ENCODE measurements at regions of chr3 and their contacts with region 1.

Region 1: DNA sequence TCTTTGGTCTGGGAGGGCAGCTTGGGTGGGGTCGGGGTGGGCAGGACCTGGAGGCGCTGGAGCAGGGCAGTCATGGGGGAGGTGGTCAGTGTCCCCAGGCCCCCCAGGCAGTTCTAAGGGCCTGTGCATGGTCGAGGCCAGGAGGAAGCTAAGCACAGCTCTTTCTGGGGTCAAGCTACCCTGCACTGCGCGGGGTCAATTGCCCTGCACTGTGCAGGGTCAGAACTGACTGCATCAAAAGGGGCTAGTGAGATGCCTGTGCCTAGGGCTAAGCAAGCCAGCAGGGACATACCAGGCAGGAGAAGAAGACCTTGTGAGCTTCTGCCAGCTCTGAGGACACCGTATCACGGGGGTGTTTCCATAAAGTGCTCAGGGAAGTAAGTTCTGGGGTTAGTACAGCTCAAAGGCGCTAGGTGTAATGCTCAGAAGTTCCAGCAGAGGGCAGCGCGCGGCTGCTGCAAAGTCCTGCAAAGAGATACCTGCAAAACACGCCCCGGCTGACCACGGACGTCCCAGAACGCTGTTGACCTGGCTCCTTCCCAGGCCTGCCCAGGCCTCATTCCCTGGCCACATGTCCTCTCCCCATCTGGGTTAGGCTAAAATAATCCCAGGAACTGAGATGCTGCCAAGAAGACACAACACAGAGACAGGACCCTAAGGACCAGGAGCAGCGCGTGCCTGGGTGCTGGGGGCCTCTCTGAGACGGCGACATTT is 18.8 kb upstream of the IQSEC1 start:
- DNase-seq: peak; percentile 73 to 80
- ATAC-seq: peak; percentile 89
- H3K4me3 ChIP-seq: no peak overlapping the region
- H3K27ac ChIP-seq: peak overlapping the region in 3 of 4 donors; percentile 4 to 46 (median 27)
- H3K4me1 ChIP-seq: peaks cover 5 to 7% of the 10 kb centered on the region in 2 donors
- H3K27me3 ChIP-seq: no peaks in the 10 kb centered on the region
- CTCF ChIP-seq: peak; percentile 93 to 98 (median 95)
- POLR2A ChIP-seq: no peak

Region 2: DNA sequence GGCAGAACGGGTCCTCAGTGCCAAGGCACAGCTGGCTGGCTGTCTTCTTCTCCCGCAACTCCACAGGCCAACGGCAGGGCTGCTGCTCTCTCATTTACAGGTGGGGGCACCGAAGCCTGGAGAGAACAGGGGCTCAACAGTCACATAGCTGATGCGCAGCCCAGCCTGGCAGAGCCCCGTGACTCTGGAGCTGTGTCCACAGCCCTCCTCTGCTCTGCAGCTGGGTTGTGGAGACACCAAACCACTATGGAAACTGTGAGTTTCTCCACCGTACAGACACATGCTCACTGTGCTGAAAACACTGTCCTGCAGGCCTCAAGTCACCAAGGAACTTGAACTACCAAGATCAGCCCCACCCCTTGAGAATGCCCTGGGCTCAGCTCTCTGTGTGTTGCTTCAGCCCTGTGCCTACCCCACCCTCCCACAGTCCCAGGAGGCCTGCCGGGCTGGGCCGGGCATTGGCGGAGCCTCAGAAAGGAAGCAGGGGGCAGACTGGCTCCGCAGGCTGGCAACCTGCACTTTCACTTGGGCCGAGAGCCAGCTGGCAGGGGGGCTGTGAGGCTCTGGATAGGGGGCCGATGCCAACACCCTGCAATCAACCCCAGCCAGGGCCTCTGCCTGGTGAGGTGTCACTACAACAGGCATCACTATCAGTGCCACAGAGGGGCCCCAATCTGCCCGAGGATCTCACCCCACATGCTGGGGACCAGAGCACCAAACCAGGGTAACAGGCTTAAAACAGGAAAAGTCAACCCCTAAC is 137.0 kb before region 1 on chr3:
- in situ Hi-C with region 1: no loop called
- intact Hi-C with region 1: no loop called
- DNase-seq: peak; percentile 84 to 95
- ATAC-seq: peak; percentile 95
- H3K4me3 ChIP-seq: no peak overlapping the region
- H3K27ac ChIP-seq: peak overlapping the region; percentile 70 to 88 (median 80)
- H3K4me1 ChIP-seq: peaks cover 75 to 85% of the 10 kb centered on the region in 2 donors
- H3K27me3 ChIP-seq: no peaks in the 10 kb centered on the region
- CTCF ChIP-seq: peak in 4 of 5 experiments; percentile 3 to 52 (median 35)
- POLR2A ChIP-seq: peak in 1 of 2 donors; percentile 21

Region 3: GRCh38 chr3:13215940-13216546 is 124.0 kb after region 1 on chr3:
- in situ Hi-C with region 1: no loop called
- intact Hi-C with region 1: loop called (anchors 10 kb)
- DNase-seq: no peak
- ATAC-seq: no peak
- H3K4me3 ChIP-seq: no peak overlapping the region
- H3K27ac ChIP-seq: no peak overlapping the region
- H3K4me1 ChIP-seq: peaks cover 0 to 4% of the 10 kb centered on the region in 2 donors
- H3K27me3 ChIP-seq: no peaks in the 10 kb centered on the region
- CTCF ChIP-seq: no peak
- POLR2A ChIP-seq: no peak

Region 4: GRCh38 chr3:13282986-13283876 is 191.2 kb after region 1 on chr3:
- in situ Hi-C with region 1: loop called in 2 of 4 experiments (anchors 25 kb)
- intact Hi-C with region 1: loop called (anchors 1 kb)
- DNase-seq: no peak
- ATAC-seq: peak; percentile 18 to 37
- H3K4me3 ChIP-seq: peak overlapping the region; percentile 26 to 55 (median 45)
- H3K27ac ChIP-seq: no peak overlapping the region
- H3K4me1 ChIP-seq: peaks cover 0 to 8% of the 10 kb centered on the region in 2 donors
- H3K27me3 ChIP-seq: peaks cover 30 to 40% (median 37%) of the 10 kb centered on the region in 3 donors
- CTCF ChIP-seq: peak; percentile 14 to 51 (median 35)
- POLR2A ChIP-seq: no peak

Region 5: GRCh38 chr3:13332158-13332557 is 240.1 kb after region 1 on chr3:
- in situ Hi-C with region 1: no loop called
- intact Hi-C with region 1: loop called (anchors 1 kb)
- DNase-seq: peak; percentile 73 to 78
- ATAC-seq: peak; percentile 97
- H3K4me3 ChIP-seq: no peak overlapping the region
- H3K27ac ChIP-seq: peak overlapping the region; percentile 72 to 88 (median 81)
- H3K4me1 ChIP-seq: peaks cover 9 to 14% of the 10 kb centered on the region in 2 donors
- H3K27me3 ChIP-seq: no peaks in the 10 kb centered on the region
- CTCF ChIP-seq: no peak
- POLR2A ChIP-seq: peak; percentile 13 to 20

Region 6: GRCh38 chr3:13452490-13453335 is 360.7 kb after region 1 on chr3:
- in situ Hi-C with region 1: loop called (anchors 5 to 25 kb)
- intact Hi-C with region 1: loop called (anchors 1 kb)
- DNase-seq: no peak
- ATAC-seq: peak; percentile 37
- H3K4me3 ChIP-seq: peak overlapping the region; percentile 56 to 71 (median 65)
- H3K27ac ChIP-seq: peak overlapping the region; percentile 77 to 92 (median 85)
- H3K4me1 ChIP-seq: peaks cover 9 to 12% of the 10 kb centered on the region in 2 donors
- H3K27me3 ChIP-seq: no peaks in the 10 kb centered on the region
- CTCF ChIP-seq: peak; percentile 26 to 61 (median 40)
- POLR2A ChIP-seq: no peak

Region 7: GRCh38 chr3:13648060-13649001 is 556.3 kb after region 1 on chr3:
- in situ Hi-C with region 1: loop called (anchors 5 to 25 kb)
- intact Hi-C with region 1: loop called (anchors 1 kb)
- DNase-seq: peak; percentile 56 to 69
- ATAC-seq: peak; percentile 76 to 81
- H3K4me3 ChIP-seq: no peak overlapping the region
- H3K27ac ChIP-seq: no peak overlapping the region
- H3K4me1 ChIP-seq: peaks cover 7 to 8% of the 10 kb centered on the region in 2 donors
- H3K27me3 ChIP-seq: peaks cover 0 to 8% (median 0%) of the 10 kb centered on the region in 3 donors
- CTCF ChIP-seq: peak; percentile 91 to 99 (median 95)
- POLR2A ChIP-seq: no peak